Psoas muscle (tissue), 8 donors: ENCODE measurements at regions of chr18 and their contacts with region 1.

Region 1: DNA sequence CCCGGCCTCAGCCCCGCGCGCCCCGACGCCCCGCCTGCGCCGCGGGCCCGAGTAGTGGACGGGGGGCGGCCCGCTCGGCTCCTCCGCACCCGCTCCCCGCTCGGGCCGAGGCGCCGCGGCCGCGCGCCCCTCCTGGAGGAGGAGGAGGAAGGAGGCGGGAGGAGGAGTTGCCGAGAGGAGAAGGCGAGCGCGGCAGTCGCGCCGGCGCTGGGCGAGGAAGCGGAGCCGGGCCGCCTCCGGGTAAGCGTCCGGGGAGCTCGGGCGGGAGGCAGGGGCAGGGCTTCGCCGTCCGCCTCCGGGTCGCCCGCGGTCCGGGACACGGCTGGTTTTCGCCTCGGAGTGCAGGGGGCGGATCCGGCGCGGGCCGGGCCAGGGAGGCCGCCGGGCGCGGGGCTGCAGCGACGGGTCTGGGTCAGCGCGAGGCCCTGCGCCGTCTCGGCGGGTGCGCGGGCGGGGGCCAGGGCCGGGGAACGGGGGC is at the start of gene SOCS6:
- DNase-seq: peak; percentile 62 to 79
- ATAC-seq: peak; percentile 60 to 73 (median 67)
- H3K4me3 ChIP-seq: peak within 1 kb of the TSS; percentile 89
- H3K27ac ChIP-seq: peak within 1 kb of the TSS; percentile 94
- H3K4me1 ChIP-seq: peaks cover 36% of the 10 kb centered on the region
- H3K27me3 ChIP-seq: no peaks in the 10 kb centered on the region
- CTCF ChIP-seq: no peak
- total RNA-seq, gene SOCS6: 19.1 to 30.2 (median 24.9) TPM

Region 2: GRCh38 chr18:70205421-70206397 is 83.2 kb before region 1 on chr18 and contains the start of gene RTTN:
- intact Hi-C with region 1: loop called (anchors 2 to 5 kb)
- DNase-seq: peak; percentile 94 to 97
- ATAC-seq: peak; percentile 99 to 100 (median 100)
- H3K4me3 ChIP-seq: peak within 1 kb of the TSS; percentile 90
- H3K27ac ChIP-seq: peak within 1 kb of the TSS; percentile 99
- H3K4me1 ChIP-seq: peaks cover 8% of the 10 kb centered on the region
- H3K27me3 ChIP-seq: no peaks in the 10 kb centered on the region
- CTCF ChIP-seq: no peak
- total RNA-seq, gene RTTN: 3.9 to 7.1 (median 4.5) TPM

Region 3: DNA sequence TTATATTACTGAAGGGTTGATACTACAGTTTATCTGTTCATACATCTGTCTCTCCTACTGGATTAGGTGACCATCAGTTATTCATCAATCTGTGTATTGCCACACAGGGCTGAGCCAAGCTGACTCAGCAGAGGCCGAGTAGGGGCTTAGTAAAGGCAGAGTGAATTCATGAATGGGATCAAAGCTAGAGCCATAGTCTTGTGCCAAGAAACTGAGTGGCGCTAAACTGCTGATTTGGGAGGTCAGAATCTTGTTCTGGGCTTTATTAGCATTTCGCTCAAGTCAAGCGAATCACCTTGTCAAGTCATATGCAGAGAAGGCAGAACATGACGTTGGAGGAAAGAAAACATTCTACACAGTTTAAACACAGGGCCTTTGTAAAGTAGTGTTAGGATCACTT is 34.0 kb after region 1 on chr18:
- intact Hi-C with region 1: no loop called
- DNase-seq: no peak
- ATAC-seq: peak in 2 of 4 donors; percentile 32 to 42
- H3K4me3 ChIP-seq: no peak overlapping the region
- H3K27ac ChIP-seq: no peak overlapping the region
- H3K4me1 ChIP-seq: peaks cover 12% of the 10 kb centered on the region
- H3K27me3 ChIP-seq: no peaks in the 10 kb centered on the region
- CTCF ChIP-seq: no peak

Region 4: GRCh38 chr18:70337139-70337972 is 48.5 kb after region 1 on chr18:
- intact Hi-C with region 1: loop called (anchors 5 kb)
- DNase-seq: peak; percentile 20 to 59
- ATAC-seq: peak; percentile 94 to 98 (median 98)
- H3K4me3 ChIP-seq: peak overlapping the region; percentile 52
- H3K27ac ChIP-seq: peak overlapping the region; percentile 95
- H3K4me1 ChIP-seq: peaks cover 19% of the 10 kb centered on the region
- H3K27me3 ChIP-seq: no peaks in the 10 kb centered on the region
- CTCF ChIP-seq: no peak

Region 5: DNA sequence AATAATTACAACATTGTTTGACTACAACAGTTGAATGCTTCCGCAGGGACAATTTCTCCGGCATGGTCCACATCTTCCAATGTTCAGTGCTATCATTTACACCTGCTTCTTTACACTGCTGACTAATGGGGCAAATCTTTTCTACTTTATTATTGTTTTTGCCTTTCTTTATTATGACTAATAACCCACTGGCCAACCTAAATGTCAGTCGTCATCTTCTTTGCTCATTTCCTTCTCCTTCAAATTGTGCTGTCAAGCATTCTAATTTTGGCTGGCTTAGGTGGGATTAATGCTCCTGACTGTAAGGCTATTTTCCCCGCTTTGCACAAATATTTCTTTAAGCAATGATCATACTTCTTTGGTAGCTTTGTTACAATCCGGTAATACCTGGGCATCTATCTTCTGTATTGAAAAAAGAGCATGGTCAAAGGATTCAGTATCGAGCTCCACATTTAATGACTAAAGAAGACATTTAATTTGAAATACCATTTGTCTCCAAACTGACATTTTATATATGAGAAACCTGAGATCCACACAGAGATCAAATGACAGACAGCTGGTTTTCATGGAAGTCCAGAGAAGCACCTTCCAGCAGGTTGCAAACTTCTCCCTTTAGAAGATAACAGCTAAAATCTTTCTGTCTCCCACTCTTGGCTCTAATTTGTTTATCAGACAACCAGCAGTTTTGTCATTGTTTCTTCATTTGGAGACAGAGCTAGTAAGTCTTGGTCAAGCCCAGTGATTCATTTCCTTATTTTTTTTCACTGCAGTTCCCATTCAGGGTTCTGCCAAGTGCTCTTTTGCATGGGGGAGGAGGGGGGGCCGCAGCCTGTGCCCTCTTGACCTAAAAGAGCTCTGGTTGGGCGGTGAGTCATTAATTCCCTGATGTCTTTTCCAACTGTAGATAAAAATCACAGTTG is 132.8 kb after region 1 on chr18:
- intact Hi-C with region 1: loop called in 1 of 2 experiments (anchors 5 kb)
- DNase-seq: peak; percentile 72 to 82
- ATAC-seq: peak; percentile 77 to 96 (median 89)
- H3K4me3 ChIP-seq: no peak overlapping the region
- H3K27ac ChIP-seq: peak overlapping the region; percentile 18
- H3K4me1 ChIP-seq: peaks cover 7% of the 10 kb centered on the region
- H3K27me3 ChIP-seq: no peaks in the 10 kb centered on the region
- CTCF ChIP-seq: no peak

Region 6: GRCh38 chr18:70431203-70431624 is 142.3 kb after region 1 on chr18:
- intact Hi-C with region 1: loop called in 1 of 2 experiments (anchors 5 kb)
- DNase-seq: no peak
- ATAC-seq: no peak
- H3K4me3 ChIP-seq: no peak overlapping the region
- H3K27ac ChIP-seq: no peak overlapping the region
- H3K4me1 ChIP-seq: peaks cover 4% of the 10 kb centered on the region
- H3K27me3 ChIP-seq: no peaks in the 10 kb centered on the region
- CTCF ChIP-seq: no peak

Region 7: DNA sequence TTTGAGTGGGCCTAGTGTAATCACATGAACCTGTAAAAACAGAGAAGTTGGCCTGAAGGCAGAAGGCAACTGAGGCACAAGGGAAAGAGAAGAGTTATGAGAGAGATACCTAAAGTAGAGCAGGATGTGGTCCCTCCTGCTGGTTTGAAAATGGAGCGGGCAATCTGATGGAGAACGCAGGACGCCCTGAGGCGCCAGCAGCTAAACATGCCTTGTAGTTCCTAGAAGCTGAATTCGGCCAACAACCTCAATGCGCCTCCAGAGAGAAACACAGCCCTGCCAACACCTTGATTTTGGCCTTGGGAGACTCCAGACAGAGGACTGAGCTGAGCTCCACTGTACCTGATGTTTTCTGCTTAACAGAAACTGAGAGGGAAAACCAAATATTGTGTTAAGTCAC is 469.9 kb after region 1 on chr18:
- intact Hi-C with region 1: no loop called
- DNase-seq: no peak
- ATAC-seq: no peak
- H3K4me3 ChIP-seq: no peak overlapping the region
- H3K27ac ChIP-seq: no peak overlapping the region
- H3K4me1 ChIP-seq: no peaks in the 10 kb centered on the region
- H3K27me3 ChIP-seq: no peaks in the 10 kb centered on the region
- CTCF ChIP-seq: no peak